Activated CD4-positive, alpha-beta T cell treated with anti-CD3 and anti-CD28 coated beads, Interleukin-2, amount 10 ng/mL, durations not matched to agents 24 days and 14 days (primary cell): ENCODE measurements at regions of chr6 and their contacts with region 1.

Region 1: DNA sequence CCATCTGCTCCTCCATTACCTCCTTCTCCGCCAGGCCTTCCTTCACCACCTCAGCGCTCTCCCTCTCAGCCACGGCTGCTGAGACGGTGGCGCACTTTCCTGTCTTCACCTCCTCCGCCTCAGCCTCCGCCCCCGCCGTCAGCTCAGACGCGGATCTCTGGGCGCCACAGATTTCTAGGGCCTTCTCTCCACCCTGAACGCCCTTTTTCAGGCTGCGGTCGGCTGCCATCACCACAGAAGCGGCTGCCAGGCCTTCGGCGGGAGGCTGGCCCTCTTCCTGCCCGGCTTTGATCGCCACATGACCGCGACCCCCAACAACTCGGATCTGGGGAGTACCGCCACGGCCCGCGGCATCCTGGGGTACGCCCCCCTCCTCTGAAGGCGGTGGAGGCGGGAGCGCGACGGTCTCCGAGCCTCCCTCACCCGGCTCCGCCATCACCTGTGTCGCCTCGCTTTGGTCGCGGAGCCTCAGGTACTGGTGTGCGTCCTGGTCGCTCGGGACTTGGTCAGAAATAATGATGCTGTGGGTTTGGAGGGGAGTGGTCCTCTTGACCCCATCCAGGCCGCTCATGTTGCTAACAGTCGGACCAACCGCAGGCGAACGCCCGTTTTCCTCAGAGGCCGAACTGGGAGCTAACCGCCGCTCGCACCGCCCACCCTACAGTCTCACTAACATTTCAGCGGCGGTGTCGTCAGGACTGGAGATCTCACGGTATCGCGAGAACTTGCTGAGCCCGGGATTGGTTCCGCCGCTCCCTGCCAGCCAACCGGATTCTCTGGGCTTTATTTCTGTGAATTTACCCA is at the start of gene TSPYL1:
- DNase-seq: peak; percentile 98
- H3K4me3 Mint-ChIP-seq: peak within 1 kb of the TSS; percentile 99
- H3K27ac Mint-ChIP-seq: peak within 1 kb of the TSS; percentile 98
- H3K4me1 Mint-ChIP-seq: peaks cover 42% of the 10 kb centered on the region
- H3K27me3 Mint-ChIP-seq: peaks cover 5% of the 10 kb centered on the region
- total RNA-seq, gene TSPYL1: 39.1 and 41.2 TPM in 2 replicates

Region 2: DNA sequence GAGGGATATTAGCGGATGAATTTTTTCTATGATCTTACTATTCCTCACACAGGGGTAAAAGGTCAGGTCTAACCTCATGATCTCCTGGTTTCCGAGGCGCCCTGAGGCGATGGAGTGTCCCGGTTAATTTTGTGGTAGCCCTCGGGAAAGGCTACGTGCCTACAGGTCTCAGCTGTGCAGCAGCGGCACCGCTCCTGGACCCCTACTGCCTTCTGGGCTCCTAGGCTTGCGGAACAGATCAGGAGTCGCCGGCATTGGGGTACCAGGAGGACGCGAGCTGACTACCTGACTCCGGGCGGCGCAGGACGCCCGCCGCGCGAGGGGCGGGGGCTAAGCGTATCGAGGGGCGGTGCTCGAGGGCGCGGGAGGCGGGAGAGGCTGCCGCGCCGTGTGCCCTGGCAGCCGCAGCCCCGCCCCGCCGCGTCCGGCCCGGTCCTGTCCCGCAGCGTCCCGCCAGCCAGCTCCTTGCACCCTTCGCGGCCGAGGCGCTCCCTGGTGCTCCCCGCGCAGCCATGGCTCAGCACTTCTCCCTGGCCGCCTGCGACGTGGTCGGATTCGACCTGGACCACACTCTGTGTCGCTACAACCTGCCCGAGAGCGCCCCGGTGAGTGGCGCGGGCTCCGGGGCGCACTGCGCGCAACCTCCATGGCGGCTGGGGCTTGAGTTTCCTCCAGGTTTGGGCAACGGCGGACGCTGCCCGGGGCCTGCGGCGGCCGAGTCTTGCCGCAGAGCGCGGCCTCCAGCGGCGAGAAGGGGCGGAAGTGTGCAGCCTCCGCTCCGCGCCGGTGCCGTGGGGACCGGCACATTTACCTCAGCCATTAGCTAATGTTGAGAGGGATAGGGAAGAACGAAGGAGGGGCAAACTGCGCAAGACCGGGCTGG is 178.8 kb before region 1 on chr6 and contains the start of gene NT5DC1:
- intact Hi-C with region 1: loop called (anchors 1 kb)
- DNase-seq: peak; percentile 96
- H3K4me3 Mint-ChIP-seq: peak within 1 kb of the TSS; percentile 95
- H3K27ac Mint-ChIP-seq: peak within 1 kb of the TSS; percentile 92
- H3K4me1 Mint-ChIP-seq: peaks cover 38% of the 10 kb centered on the region
- H3K27me3 Mint-ChIP-seq: no peaks in the 10 kb centered on the region
- total RNA-seq, gene NT5DC1: 38.1 and 38.9 TPM in 2 replicates

Region 3: GRCh38 chr6:116253505-116254296 is 25.8 kb before region 1 on chr6 and contains the start of gene TSPYL4:
- intact Hi-C with region 1: loop called (anchors 1 kb)
- DNase-seq: peak; percentile 98
- H3K4me3 Mint-ChIP-seq: no peak within 1 kb of the TSS
- H3K27ac Mint-ChIP-seq: no peak within 1 kb of the TSS
- H3K4me1 Mint-ChIP-seq: peaks cover 25% of the 10 kb centered on the region
- H3K27me3 Mint-ChIP-seq: no peaks in the 10 kb centered on the region
- total RNA-seq, gene TSPYL4: 22.1 and 22.2 TPM in 2 replicates

Region 4: DNA sequence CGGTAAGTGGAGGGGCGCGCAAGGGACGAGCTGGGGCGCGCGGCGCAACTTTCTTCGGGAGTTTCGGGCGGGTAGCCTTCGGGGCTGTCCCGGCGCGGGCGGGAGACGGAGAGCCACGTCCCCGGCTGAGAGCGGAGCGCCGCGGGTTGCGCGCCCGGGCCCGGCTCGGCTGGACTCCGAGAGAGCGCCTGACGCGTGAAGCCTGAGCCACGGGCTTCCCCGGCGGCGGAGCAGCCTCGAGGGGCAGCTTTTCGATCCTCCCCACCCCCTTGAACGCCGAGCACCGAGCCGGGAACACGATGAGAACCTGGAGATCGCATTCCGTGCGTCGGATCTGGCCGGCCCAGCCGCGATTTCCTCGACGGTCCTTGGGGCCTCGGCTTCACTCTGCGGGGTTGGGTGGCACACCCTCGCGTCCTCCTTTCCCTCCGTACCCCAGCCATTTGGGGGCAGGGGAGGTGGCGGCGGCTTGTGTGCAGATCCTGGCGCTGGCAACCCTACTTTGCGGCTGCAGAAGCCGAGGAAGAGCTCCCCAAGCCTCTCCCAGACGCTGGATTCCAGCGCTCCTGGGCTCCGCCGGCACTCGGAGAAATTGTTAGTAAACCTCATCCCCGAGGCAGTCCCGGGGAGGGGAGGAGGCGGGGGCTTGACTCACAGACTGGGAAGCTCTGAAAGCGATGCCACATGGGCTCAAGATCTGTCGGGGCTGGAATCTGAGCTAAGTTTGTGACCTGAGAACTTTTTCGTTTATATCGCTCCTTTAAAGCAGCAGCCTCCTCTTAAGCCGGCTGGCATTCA is 91.9 kb after region 1 on chr6:
- intact Hi-C with region 1: loop called (anchors 5 kb)
- DNase-seq: peak; percentile 73
- H3K4me3 Mint-ChIP-seq: peak overlapping the region; percentile 79
- H3K27ac Mint-ChIP-seq: no peak overlapping the region
- H3K4me1 Mint-ChIP-seq: peaks cover 10% of the 10 kb centered on the region
- H3K27me3 Mint-ChIP-seq: peaks cover 62% of the 10 kb centered on the region

Region 5: DNA sequence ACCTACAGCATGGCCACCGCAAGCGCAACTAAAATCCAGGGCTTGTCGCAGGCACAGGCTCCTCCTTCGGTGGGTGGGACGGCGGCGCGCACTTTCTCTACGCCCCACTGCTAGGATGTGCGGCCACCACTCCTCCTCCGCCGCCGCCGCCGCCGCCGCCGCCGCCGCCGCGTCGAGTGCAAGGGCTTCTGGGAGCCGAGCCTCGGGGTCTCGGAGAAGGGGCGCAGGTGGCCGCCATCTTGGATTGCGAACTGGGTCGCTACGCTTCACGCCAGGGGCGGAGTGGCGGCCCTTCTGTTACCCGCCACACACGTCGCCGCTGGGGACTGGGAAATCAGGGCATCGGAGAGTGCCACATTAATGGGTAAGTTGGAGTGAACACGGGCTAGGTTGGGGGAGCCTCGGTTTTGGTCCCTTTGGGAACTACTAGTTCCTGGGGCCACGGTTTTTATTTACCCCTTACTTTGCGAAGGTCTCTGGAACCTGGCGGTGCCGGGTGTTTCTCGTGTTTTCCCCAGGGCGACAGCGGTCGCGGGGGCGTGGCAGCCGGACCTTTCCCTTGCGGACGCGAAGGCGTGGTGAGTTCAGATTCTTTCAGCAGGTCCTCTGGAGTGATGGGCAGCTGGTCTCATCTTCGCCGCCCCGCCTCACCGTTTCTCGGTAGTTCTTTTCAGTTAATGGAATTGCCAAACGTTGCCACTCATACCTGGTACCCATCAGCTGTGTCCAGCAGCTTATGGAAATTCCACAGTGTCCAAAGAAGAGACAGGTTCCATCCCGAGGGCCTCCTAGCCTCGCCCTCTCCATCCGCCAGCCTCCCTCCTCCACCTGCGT is 401.7 kb after region 1 on chr6 and contains the start of gene KPNA5:
- intact Hi-C with region 1: loop called (anchors 1 kb)
- DNase-seq: peak; percentile 97
- H3K4me3 Mint-ChIP-seq: peak within 1 kb of the TSS; percentile 99
- H3K27ac Mint-ChIP-seq: peak within 1 kb of the TSS; percentile 99
- H3K4me1 Mint-ChIP-seq: peaks cover 29% of the 10 kb centered on the region
- H3K27me3 Mint-ChIP-seq: no peaks in the 10 kb centered on the region
- total RNA-seq, gene KPNA5: 7.2 and 7.7 TPM in 2 replicates